Naive thymus-derived CD4-positive, alpha-beta T cell (primary cell): ENCODE measurements at regions of chr2 and their contacts with region 1.

Region 1: GRCh38 chr2:174511580-174512248 is 24.9 kb upstream of the GPR155 start:
- DNase-seq: no peak
- ATAC-seq: no peak
- H3K4me3 ChIP-seq: no peak overlapping the region
- H3K4me3 Mint-ChIP-seq: peak overlapping the region in 5 of 10 donors; percentile 50 to 78 (median 53)
- H3K27ac ChIP-seq: no peak overlapping the region
- H3K27ac Mint-ChIP-seq: peak overlapping the region in 2 of 9 donors; percentile 48 to 65
- H3K4me1 ChIP-seq: no peaks in the 10 kb centered on the region
- H3K4me1 Mint-ChIP-seq: peaks cover 8 to 23% (median 17%) of the 10 kb centered on the region in 7 donors
- H3K27me3 ChIP-seq: no peaks in the 10 kb centered on the region
- H3K27me3 Mint-ChIP-seq: peaks cover 0 to 3% (median 0%) of the 10 kb centered on the region in 5 donors

Region 2: DNA sequence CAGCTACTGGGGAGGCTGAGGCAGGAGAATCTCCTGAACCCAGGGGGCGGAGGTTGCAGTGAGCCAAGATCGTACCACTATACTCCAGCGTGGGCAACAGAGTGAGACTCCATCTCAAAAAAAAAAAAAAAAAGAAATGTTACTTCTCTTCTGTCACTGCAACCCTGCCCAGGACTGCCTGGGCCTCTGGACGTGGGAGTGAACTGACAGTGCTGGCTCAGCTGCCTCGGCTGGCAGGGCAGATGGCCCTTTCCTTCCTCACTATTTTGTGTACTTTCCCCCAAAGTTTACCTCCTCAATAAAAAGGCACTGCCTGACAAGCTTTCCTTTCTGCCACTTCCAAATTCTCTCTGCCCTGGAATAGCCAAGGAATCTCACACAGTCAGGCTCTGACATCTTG is 12.3 kb before region 1 on chr2:
- CTCF ChIA-PET with region 1: no interaction called
- POLR2A ChIA-PET with region 1: no interaction called
- intact Hi-C with region 1: loop called in 1 of 2 experiments (anchors 2 kb)
- DNase-seq: no peak
- ATAC-seq: no peak
- H3K4me3 ChIP-seq: no peak overlapping the region
- H3K4me3 Mint-ChIP-seq: no peak overlapping the region
- H3K27ac ChIP-seq: no peak overlapping the region
- H3K27ac Mint-ChIP-seq: peak overlapping the region in 1 of 9 donors; percentile 12
- H3K4me1 ChIP-seq: peaks cover 13 to 15% of the 10 kb centered on the region in 2 donors
- H3K4me1 Mint-ChIP-seq: peaks cover 5 to 38% (median 21%) of the 10 kb centered on the region in 7 donors
- H3K27me3 ChIP-seq: no peaks in the 10 kb centered on the region
- H3K27me3 Mint-ChIP-seq: peaks cover 0 to 2% (median 0%) of the 10 kb centered on the region in 5 donors

Region 3: GRCh38 chr2:174546581-174547506 is 35.1 kb after region 1 on chr2:
- CTCF ChIA-PET with region 1: no interaction called
- POLR2A ChIA-PET with region 1: no interaction called
- intact Hi-C with region 1: no loop called
- DNase-seq: peak in 4 of 9 donors; percentile 13 to 38 (median 22)
- ATAC-seq: peak; percentile 91
- H3K4me3 ChIP-seq: no peak overlapping the region
- H3K4me3 Mint-ChIP-seq: no peak overlapping the region
- H3K27ac ChIP-seq: no peak overlapping the region
- H3K27ac Mint-ChIP-seq: peak overlapping the region; percentile 11 to 88 (median 68)
- H3K4me1 ChIP-seq: peaks cover under 1 to 3% of the 10 kb centered on the region in 2 donors
- H3K4me1 Mint-ChIP-seq: peaks cover 5 to 17% (median 13%) of the 10 kb centered on the region in 7 donors
- H3K27me3 ChIP-seq: no peaks in the 10 kb centered on the region
- H3K27me3 Mint-ChIP-seq: peaks cover 0 to 8% (median 0%) of the 10 kb centered on the region in 5 donors

Region 4: GRCh38 chr2:174835797-174836255 is 324.1 kb after region 1 on chr2:
- CTCF ChIA-PET with region 1: no interaction called
- POLR2A ChIA-PET with region 1: no interaction called
- intact Hi-C with region 1: no loop called
- DNase-seq: peak in 1 of 9 donors; percentile 63
- ATAC-seq: no peak
- H3K4me3 ChIP-seq: no peak overlapping the region
- H3K4me3 Mint-ChIP-seq: no peak overlapping the region
- H3K27ac ChIP-seq: no peak overlapping the region
- H3K27ac Mint-ChIP-seq: no peak overlapping the region
- H3K4me1 ChIP-seq: no peaks in the 10 kb centered on the region
- H3K4me1 Mint-ChIP-seq: peaks cover 5 to 24% (median 10%) of the 10 kb centered on the region in 7 donors
- H3K27me3 ChIP-seq: no peaks in the 10 kb centered on the region
- H3K27me3 Mint-ChIP-seq: peaks cover 0 to 11% (median 4%) of the 10 kb centered on the region in 5 donors